ENCODE measurements at regions of chr2 and their contacts with region 1.

Region 1: GRCh38 chr2:43269074-43269572 is 42.7 kb upstream of the ZFP36L2 start:
- DNase-seq: peak; percentile 91 to 92
- ATAC-seq: peak; percentile 80 to 81
- H3K4me3 ChIP-seq: peak overlapping the region in 3 of 4 donors; percentile 7 to 17 (median 14)
- H3K27ac ChIP-seq: peak overlapping the region; percentile 72 to 88 (median 77)
- H3K4me1 ChIP-seq: peaks cover 11 to 55% of the 10 kb centered on the region in 2 donors
- H3K27me3 ChIP-seq: no peaks in the 10 kb centered on the region
- CTCF ChIP-seq: no peak
- POLR2A ChIP-seq: peak; percentile 39 to 58

Region 2: DNA sequence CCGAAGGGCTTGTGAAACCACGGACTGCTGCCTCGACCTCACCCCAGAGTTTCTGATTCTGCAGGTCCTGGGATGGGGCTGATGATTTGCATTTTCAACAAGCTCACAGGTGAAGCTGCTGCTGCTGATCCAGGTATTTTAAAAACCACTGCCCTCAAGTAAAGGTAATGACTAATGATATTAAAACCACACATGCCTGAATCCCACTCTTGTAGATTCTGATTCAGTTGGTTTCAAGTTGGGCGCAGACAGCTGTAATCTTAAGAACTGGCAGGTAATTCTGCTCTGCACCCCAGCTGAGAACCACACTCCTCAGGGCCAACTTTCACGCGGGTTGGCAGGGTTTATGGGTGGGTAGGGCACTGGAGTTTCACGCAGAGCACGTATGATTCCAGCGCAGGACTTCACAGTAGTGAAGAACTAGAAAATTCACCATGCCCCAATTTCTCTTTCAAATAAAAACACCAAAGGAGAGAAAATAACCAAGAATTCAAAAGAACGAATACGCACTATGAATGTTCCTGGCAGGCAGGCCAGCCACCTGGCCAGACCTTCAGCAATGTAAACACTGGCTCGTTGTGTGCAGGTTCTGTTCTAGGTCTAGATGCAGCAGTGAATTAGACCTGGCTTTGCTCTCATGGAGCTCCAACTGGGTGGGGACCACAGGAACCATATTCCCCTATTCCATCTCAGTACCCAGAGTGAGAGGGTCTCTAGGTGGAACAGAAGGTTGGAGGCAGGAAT is 31.9 kb after region 1 on chr2:
- in situ Hi-C with region 1: no loop called
- intact Hi-C with region 1: loop called (anchors 5 kb)
- DNase-seq: no peak
- ATAC-seq: no peak
- H3K4me3 ChIP-seq: peak overlapping the region in 1 of 4 donors; percentile 27
- H3K27ac ChIP-seq: peak overlapping the region; percentile 2 to 57 (median 12)
- H3K4me1 ChIP-seq: peaks cover 26 to 39% of the 10 kb centered on the region in 2 donors
- H3K27me3 ChIP-seq: no peaks in the 10 kb centered on the region
- CTCF ChIP-seq: no peak
- POLR2A ChIP-seq: no peak

Region 3: GRCh38 chr2:43391878-43392215 is 122.7 kb after region 1 on chr2:
- in situ Hi-C with region 1: no loop called
- intact Hi-C with region 1: loop called (anchors 5 kb)
- DNase-seq: no peak
- ATAC-seq: peak in 1 of 2 donors; percentile 37
- H3K4me3 ChIP-seq: no peak overlapping the region
- H3K27ac ChIP-seq: peak overlapping the region; percentile 2 to 26 (median 15)
- H3K4me1 ChIP-seq: peaks cover 26 to 29% of the 10 kb centered on the region in 2 donors
- H3K27me3 ChIP-seq: no peaks in the 10 kb centered on the region
- CTCF ChIP-seq: no peak
- POLR2A ChIP-seq: no peak